Panc1 (cell line): ENCODE measurements at regions of chr13 and their contacts with region 1.

Region 1: GRCh38 chr13:95083758-95084157 is 217.5 kb downstream of the ABCC4 start:
- DNase-seq: no peak
- ATAC-seq: no peak
- H3K4me3 ChIP-seq: no peak overlapping the region
- H3K27ac ChIP-seq: no peak overlapping the region
- H3K4me1 ChIP-seq: peaks cover 5% of the 10 kb centered on the region; the same call in 1 of the 2 replicates
- H3K27me3 ChIP-seq: no peaks in the 10 kb centered on the region
- CTCF ChIP-seq: no peak

Region 2: DNA sequence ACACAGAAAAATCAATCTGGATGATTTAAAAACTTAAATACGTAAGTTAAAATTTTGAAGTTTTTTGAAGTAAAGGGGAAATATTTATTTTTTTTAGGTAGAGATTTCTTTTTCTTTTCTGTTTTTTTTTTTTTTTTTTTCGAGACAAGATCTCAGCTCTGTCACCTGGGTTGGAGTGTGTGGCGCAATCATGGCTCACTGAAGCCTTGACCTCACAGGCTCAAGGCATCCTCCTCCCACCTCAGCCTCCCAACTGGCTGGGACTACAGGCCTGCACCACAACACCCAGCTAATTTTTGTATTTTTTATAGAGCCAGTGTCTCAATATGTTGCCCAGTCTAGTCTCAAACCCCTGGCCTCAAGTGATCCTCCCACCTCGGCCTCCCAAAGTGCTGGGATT is 348.4 kb after region 1 on chr13:
- CTCF ChIA-PET with region 1: no interaction called
- POLR2A ChIA-PET with region 1: interaction called, 10 read pairs
- in situ Hi-C with region 1: no loop called
- intact Hi-C with region 1: no loop called
- DNase-seq: no peak
- ATAC-seq: no peak
- H3K4me3 ChIP-seq: no peak overlapping the region
- H3K27ac ChIP-seq: no peak overlapping the region
- H3K4me1 ChIP-seq: no peaks in the 10 kb centered on the region
- H3K27me3 ChIP-seq: no peaks in the 10 kb centered on the region
- CTCF ChIP-seq: no peak